Activated CD4-positive, alpha-beta memory T cell treated with anti-CD3 and anti-CD28 coated beads, Interleukin-2, amount 10 ng/mL, durations not matched to agents 7 days and 5 days (primary cell): ENCODE measurements at regions of chr1 and their contacts with region 1.

Region 1: GRCh38 chr1:36187800-36188593 is 32.0 kb downstream of the MAP7D1 start:
- DNase-seq: peak; percentile 84
- H3K4me3 Mint-ChIP-seq: no peak overlapping the region
- H3K27ac Mint-ChIP-seq: peak overlapping the region; percentile 38
- H3K4me1 Mint-ChIP-seq: peaks cover 8% of the 10 kb centered on the region
- H3K27me3 Mint-ChIP-seq: no peaks in the 10 kb centered on the region

Region 2: GRCh38 chr1:35857830-35858229 is 330.2 kb before region 1 on chr1:
- CTCF ChIA-PET with region 1: no interaction called
- POLR2A ChIA-PET with region 1: no interaction called
- DNase-seq: no peak
- H3K4me3 Mint-ChIP-seq: no peak overlapping the region
- H3K27ac Mint-ChIP-seq: no peak overlapping the region
- H3K4me1 Mint-ChIP-seq: no peaks in the 10 kb centered on the region
- H3K27me3 Mint-ChIP-seq: no peaks in the 10 kb centered on the region

Region 3: DNA sequence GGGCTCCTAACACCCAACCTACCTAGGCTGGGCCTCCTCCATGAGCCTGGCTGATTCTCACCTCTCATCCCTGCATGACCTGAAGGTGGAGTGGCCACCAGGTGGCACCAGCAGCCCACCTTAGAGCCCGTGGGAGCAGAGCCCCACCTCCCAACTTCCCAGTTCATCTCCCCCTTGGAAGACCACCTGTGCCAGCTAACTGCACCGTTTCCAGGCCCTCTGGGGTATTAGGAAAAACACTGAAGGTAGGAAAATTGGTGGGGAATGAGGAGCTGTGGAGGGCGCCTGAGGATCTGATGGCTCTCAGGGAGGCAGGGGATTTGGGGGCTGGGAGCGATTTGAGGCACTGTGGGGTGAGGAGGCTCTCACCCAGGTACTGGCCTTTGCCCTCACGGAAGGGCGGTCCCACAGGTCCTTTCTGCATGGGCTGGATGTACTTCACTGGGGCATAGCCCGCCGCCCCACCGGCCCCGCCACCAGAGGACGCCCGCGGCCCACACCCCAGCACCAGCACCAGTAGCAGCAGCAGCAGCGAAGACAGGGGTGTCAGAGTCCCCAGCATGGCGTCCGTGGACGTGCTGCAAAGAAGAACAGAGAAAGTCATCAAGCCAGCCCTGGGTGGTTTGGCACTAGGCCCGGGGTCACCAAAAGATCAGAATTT is 88.2 kb before region 1 on chr1:
- CTCF ChIA-PET with region 1: interaction called, 10 read pairs
- POLR2A ChIA-PET with region 1: no interaction called
- DNase-seq: peak; percentile 78
- H3K4me3 Mint-ChIP-seq: no peak overlapping the region
- H3K27ac Mint-ChIP-seq: no peak overlapping the region
- H3K4me1 Mint-ChIP-seq: peaks cover 7% of the 10 kb centered on the region
- H3K27me3 Mint-ChIP-seq: no peaks in the 10 kb centered on the region

Region 4: DNA sequence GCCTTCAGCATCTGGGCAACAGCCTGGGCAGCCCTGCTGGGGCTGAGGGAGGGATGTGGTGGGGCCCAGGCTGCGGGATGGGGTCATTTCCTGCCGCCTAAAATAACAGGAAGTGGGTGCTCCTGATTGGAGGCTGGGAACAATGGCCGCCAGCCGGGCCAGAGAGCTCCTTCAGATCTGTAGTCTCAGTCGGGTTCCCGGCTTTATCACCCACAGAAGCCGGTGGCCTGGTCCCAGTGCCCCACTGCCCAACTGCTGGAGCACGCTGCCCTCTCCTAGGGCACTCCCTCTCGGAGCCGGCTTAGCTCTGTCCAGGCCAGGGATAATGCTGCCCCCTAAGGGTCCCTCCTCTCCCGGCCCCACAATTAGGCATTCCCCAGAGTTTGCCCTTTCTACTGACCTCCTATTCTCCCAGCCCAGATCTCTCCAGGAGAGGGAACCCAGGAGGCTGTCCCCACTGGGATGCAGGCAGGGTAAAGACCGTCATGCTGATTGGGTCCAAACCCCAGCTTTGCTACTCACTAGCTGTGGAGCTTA is 27.0 kb before region 1 on chr1:
- CTCF ChIA-PET with region 1: interaction called, 29 read pairs
- POLR2A ChIA-PET with region 1: interaction called, 27 read pairs
- DNase-seq: peak; percentile 84
- H3K4me3 Mint-ChIP-seq: peak overlapping the region; percentile 74
- H3K27ac Mint-ChIP-seq: peak overlapping the region; percentile 88
- H3K4me1 Mint-ChIP-seq: peaks cover 67% of the 10 kb centered on the region
- H3K27me3 Mint-ChIP-seq: no peaks in the 10 kb centered on the region